Caco-2 (cell line): ENCODE measurements at regions of chr3 and their contacts with region 1.

Region 1: GRCh38 chr3:100590114-100590839 is 19.1 kb upstream of the ADGRG7 start:
- DNase-seq: peak; percentile 48 to 65
- H3K4me3 ChIP-seq: no peak overlapping the region
- H3K4me3 Mint-ChIP-seq: peak overlapping the region; percentile 64
- H3K27ac Mint-ChIP-seq: no peak overlapping the region
- H3K4me1 ChIP-seq: peaks cover 13% of the 10 kb centered on the region
- H3K4me1 Mint-ChIP-seq: peaks cover 11% of the 10 kb centered on the region
- H3K27me3 ChIP-seq: no peaks in the 10 kb centered on the region
- H3K27me3 Mint-ChIP-seq: no peaks in the 10 kb centered on the region
- CTCF ChIP-seq: peak; percentile 82 to 87

Region 2: DNA sequence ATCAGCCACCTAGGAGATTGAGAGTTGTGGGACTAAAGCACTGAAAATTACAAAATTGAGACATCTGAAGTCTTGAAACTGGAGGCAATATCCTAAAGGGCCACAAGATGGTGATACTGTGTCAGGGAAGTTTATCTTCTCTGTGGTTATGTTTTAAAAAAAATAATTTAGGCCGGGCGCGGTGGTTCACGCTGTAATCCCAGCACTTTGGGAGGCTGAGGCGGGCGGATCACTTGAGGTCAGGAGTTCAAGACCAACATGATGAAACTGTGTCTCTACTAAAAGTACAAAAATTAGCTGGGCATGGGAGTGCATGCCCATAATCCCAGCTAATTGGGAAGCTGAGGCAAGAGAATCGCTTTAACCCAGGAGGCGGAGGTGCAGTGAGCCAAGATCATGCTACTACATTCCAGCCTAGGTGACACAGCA is 273.6 kb before region 1 on chr3:
- CTCF ChIA-PET with region 1: no interaction called
- POLR2A ChIA-PET with region 1: no interaction called
- intact Hi-C with region 1: loop called (anchors 1 kb)
- DNase-seq: peak; percentile 39 to 59
- H3K4me3 ChIP-seq: no peak overlapping the region
- H3K4me3 Mint-ChIP-seq: no peak overlapping the region
- H3K27ac Mint-ChIP-seq: no peak overlapping the region
- H3K4me1 ChIP-seq: no peaks in the 10 kb centered on the region
- H3K4me1 Mint-ChIP-seq: no peaks in the 10 kb centered on the region
- H3K27me3 ChIP-seq: no peaks in the 10 kb centered on the region
- H3K27me3 Mint-ChIP-seq: no peaks in the 10 kb centered on the region
- CTCF ChIP-seq: peak; percentile 59 to 64

Region 3: GRCh38 chr3:100427699-100428098 is 162.6 kb before region 1 on chr3:
- CTCF ChIA-PET with region 1: no interaction called
- POLR2A ChIA-PET with region 1: no interaction called
- intact Hi-C with region 1: no loop called
- DNase-seq: no peak
- H3K4me3 ChIP-seq: no peak overlapping the region
- H3K4me3 Mint-ChIP-seq: no peak overlapping the region
- H3K27ac Mint-ChIP-seq: no peak overlapping the region
- H3K4me1 ChIP-seq: peaks cover 3% of the 10 kb centered on the region; the same call in 1 of the 2 replicates
- H3K4me1 Mint-ChIP-seq: no peaks in the 10 kb centered on the region
- H3K27me3 ChIP-seq: no peaks in the 10 kb centered on the region
- H3K27me3 Mint-ChIP-seq: no peaks in the 10 kb centered on the region
- CTCF ChIP-seq: no peak

Region 4: GRCh38 chr3:100463002-100463401 is 127.3 kb before region 1 on chr3:
- CTCF ChIA-PET with region 1: interaction called, 61 read pairs
- POLR2A ChIA-PET with region 1: no interaction called
- intact Hi-C with region 1: loop called (anchors 1 kb)
- DNase-seq: peak in 1 of 2 experiments; percentile 58
- H3K4me3 ChIP-seq: no peak overlapping the region
- H3K4me3 Mint-ChIP-seq: no peak overlapping the region
- H3K27ac Mint-ChIP-seq: no peak overlapping the region
- H3K4me1 ChIP-seq: no peaks in the 10 kb centered on the region
- H3K4me1 Mint-ChIP-seq: no peaks in the 10 kb centered on the region
- H3K27me3 ChIP-seq: no peaks in the 10 kb centered on the region
- H3K27me3 Mint-ChIP-seq: no peaks in the 10 kb centered on the region
- CTCF ChIP-seq: peak; percentile 57 to 74

Region 5: DNA sequence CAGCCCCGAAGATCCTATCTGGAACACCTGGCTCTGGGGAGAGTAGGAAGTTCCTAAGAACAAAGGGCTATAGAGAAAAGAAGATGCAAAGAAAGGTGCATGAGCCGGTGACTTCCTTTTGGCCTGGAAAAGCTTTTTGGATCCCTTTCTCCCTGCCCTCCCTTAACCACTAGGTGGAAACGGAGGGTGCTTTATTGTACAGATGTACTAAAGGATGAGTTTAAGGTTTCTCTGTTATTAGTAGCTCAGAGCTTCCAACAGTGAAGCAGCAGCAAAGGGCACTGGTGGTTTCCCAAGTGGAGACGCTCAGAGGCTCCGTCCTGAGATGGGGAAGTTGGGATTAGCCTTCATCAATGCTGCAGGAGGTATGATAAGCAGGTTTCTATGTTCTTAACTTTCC is 13.2 kb after region 1 on chr3:
- CTCF ChIA-PET with region 1: no interaction called
- POLR2A ChIA-PET with region 1: no interaction called
- intact Hi-C with region 1: loop called (anchors 1 kb)
- DNase-seq: peak; percentile 44 to 63
- H3K4me3 ChIP-seq: no peak overlapping the region
- H3K4me3 Mint-ChIP-seq: peak overlapping the region; percentile 69
- H3K27ac Mint-ChIP-seq: peak overlapping the region; percentile 81
- H3K4me1 ChIP-seq: peaks cover 37% of the 10 kb centered on the region
- H3K4me1 Mint-ChIP-seq: peaks cover 47% of the 10 kb centered on the region
- H3K27me3 ChIP-seq: no peaks in the 10 kb centered on the region
- H3K27me3 Mint-ChIP-seq: no peaks in the 10 kb centered on the region
- CTCF ChIP-seq: peak; percentile 32 to 68